Posterior vena cava (tissue), 2 donors: ENCODE measurements at regions of chr20 and their contacts with region 1.

Region 1: DNA sequence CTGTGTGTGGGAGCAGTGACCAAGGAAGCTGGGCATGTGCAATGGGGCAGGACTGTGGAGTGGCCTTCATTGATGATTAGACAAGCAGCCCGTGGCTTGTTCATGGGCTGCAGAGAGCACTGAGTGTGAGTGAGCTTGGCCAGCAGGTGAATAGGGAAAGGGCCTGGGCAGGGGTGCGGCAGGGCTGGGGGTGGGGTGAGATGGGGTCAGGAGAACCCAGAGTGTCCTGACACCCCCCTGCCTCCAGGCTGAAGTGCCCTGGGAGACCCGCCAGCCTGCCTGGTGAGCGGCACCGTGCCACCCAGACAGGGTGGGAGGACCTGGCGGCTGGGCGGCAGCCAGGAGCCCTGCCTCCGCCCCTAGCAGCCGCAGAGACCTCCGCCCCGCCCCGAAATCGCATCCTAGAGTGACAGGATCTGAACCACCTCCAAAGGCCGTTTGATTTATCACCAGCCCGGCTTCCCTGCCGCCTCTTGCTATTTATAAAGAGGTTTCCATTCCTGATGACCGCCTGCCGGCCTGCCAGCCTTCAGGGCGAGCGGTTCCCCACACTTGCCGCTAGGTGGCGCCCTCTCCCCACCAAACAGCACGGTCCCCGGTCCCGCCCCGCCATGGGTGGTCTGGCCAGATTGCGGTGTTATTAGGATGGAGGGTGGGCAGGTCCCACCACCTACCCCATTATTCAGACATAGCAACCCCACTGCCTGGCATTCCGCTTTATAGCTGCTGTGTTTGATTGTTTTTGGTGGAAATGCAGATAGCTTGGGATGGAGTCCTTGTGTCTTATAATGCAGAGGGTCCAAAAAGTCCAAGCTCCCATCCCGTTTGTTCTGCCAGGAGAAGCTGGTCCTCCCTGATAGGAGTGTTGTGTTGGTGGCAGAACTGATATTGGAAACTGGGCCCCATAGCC is 3.5 kb downstream of the MYLK2 start:
- DNase-seq: peak; percentile 95

Region 2: DNA sequence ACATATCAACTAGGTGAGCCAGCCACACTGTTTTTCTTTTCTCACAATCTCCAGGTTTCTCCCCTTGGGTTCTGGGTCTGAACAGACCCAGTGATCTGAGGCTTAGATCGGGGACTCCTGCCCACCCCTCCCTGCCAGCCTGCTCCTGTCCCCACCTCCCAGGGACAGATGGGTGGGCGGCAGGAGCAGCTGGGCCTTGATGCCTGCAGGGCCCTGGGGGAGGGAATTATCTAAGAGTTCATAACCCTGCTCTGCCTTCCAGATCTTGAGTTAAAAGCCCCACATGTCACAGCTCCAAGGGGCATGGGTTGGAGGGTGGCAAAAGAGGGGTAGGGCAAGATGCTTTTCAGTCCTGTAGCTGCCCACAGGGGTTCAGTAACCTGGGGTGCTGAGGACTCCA is 140.1 kb after region 1 on chr20:
- intact Hi-C with region 1: loop called in 1 of 2 experiments (anchors 5 kb)
- DNase-seq: no peak

Region 3: GRCh38 chr20:32031007-32031958 is 208.6 kb after region 1 on chr20:
- intact Hi-C with region 1: loop called (anchors 2 to 5 kb)
- DNase-seq: peak; percentile 94